CD4-positive, alpha-beta T cell (primary cell): ENCODE measurements at regions of chr2 and their contacts with region 1.

Region 1: DNA sequence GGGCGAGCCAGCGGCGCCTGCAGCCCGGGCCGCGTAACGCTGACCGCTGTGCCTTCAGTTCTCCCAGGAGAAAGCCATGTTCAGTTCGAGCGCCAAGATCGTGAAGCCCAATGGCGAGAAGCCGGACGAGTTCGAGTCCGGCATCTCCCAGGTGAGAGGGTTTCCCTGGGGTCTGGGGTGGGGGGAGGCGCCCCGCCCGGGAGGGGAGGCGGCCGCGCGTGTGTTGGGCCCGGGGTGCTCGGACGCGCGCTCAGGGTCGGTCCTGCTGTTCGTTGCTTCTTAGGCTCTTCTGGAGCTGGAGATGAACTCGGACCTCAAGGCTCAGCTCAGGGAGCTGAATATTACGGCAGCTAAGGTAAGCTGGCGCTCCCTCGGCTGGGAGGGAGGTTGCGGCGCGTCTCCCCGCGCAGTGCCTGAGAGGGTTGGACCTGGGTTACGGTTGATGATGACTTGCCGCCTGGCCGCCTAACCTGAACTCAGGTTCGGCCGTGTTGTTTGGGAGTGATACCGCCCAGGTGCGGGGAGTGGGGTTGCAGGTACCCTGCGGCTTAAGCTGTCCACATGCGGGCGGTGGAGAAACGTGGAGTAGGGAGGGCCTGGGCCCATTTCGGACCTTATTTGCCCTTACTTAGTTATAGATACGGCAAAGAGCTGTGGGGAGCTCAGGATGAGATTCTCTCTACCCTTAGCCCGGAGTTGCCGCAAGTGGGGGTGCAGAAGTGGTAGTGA is 638 bp downstream of the RPS7 start:
- DNase-seq: peak in 10 of 14 experiments; percentile 18 to 66 (median 30)
- ATAC-seq: peak; percentile 43
- H3K4me3 ChIP-seq: peak overlapping the region; percentile 70
- H3K4me3 Mint-ChIP-seq: peak overlapping the region; percentile 89
- H3K27ac ChIP-seq: peak overlapping the region; percentile 76 to 89
- H3K27ac Mint-ChIP-seq: peak overlapping the region; percentile 93
- H3K4me1 ChIP-seq: peaks cover 28% of the 10 kb centered on the region
- H3K4me1 Mint-ChIP-seq: peaks cover 46% of the 10 kb centered on the region
- H3K27me3 ChIP-seq: no peaks in the 10 kb centered on the region
- H3K27me3 Mint-ChIP-seq: no peaks in the 10 kb centered on the region
- CTCF ChIP-seq: no peak

Region 2: GRCh38 chr2:3518496-3519254 is 57.0 kb before region 1 on chr2:
- CTCF ChIA-PET with region 1: no interaction called
- POLR2A ChIA-PET with region 1: interaction called, 32 read pairs
- intact Hi-C with region 1: loop called in 1 of 2 experiments (anchors 1 kb)
- DNase-seq: peak; percentile 94 to 99 (median 98)
- ATAC-seq: peak; percentile 65
- H3K4me3 ChIP-seq: peak overlapping the region; percentile 87
- H3K4me3 Mint-ChIP-seq: peak overlapping the region; percentile 94
- H3K27ac ChIP-seq: peak overlapping the region; percentile 76 to 96
- H3K27ac Mint-ChIP-seq: peak overlapping the region; percentile 88
- H3K4me1 ChIP-seq: peaks cover 24% of the 10 kb centered on the region
- H3K4me1 Mint-ChIP-seq: peaks cover 46% of the 10 kb centered on the region
- H3K27me3 ChIP-seq: no peaks in the 10 kb centered on the region
- H3K27me3 Mint-ChIP-seq: no peaks in the 10 kb centered on the region
- CTCF ChIP-seq: no peak

Region 3: DNA sequence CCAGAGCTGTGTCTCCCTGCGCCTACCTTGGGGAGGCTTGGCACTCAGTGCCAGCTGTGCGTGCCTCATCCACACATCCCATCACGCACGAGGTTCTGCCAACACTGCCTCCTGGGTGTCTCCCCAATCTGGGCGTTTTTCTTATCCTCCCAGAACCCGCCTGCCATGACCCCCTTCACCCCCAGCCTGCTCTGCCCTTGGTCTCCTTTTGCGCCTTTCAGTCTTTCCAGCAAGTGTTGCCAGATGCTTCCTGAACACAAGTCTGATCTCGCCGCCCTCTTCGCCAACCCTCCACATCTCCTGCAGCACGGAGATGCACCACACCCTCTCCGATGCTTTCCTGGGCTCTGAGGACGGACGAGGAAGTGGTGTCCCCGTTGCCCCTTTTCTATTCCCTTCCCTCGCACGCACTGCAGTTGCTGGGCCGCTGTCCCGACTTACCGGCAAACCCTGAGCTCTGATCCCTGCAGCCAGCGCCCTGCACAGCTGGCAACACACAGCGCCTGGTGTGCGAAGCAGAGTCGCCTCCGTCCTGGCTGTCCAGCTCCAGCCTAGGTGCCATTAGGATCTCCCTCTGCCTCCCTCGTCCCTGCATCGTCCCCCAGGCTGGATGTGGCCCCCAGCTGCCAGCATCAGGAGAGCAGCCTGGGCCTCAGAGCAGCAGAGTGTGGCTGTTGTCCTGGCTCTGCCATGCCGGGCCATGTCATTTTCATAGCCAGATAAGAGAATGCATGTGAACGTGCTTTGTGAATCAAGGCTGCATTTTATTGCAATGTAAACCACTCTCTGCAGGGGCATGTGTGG is 59.7 kb after region 1 on chr2:
- CTCF ChIA-PET with region 1: no interaction called
- POLR2A ChIA-PET with region 1: no interaction called
- intact Hi-C with region 1: no loop called
- DNase-seq: peak in 1 of 14 experiments; percentile 12
- ATAC-seq: no peak
- H3K4me3 ChIP-seq: no peak overlapping the region
- H3K4me3 Mint-ChIP-seq: no peak overlapping the region
- H3K27ac ChIP-seq: no peak overlapping the region
- H3K27ac Mint-ChIP-seq: no peak overlapping the region
- H3K4me1 ChIP-seq: no peaks in the 10 kb centered on the region
- H3K4me1 Mint-ChIP-seq: no peaks in the 10 kb centered on the region
- H3K27me3 ChIP-seq: no peaks in the 10 kb centered on the region
- H3K27me3 Mint-ChIP-seq: no peaks in the 10 kb centered on the region
- CTCF ChIP-seq: no peak

Region 4: GRCh38 chr2:4134551-4135550 is 559.2 kb after region 1 on chr2:
- CTCF ChIA-PET with region 1: no interaction called
- POLR2A ChIA-PET with region 1: no interaction called
- intact Hi-C with region 1: no loop called
- DNase-seq: no peak
- ATAC-seq: no peak
- H3K4me3 ChIP-seq: no peak overlapping the region
- H3K4me3 Mint-ChIP-seq: no peak overlapping the region
- H3K27ac ChIP-seq: no peak overlapping the region
- H3K27ac Mint-ChIP-seq: no peak overlapping the region
- H3K4me1 ChIP-seq: no peaks in the 10 kb centered on the region
- H3K4me1 Mint-ChIP-seq: no peaks in the 10 kb centered on the region
- H3K27me3 ChIP-seq: no peaks in the 10 kb centered on the region
- H3K27me3 Mint-ChIP-seq: no peaks in the 10 kb centered on the region
- CTCF ChIP-seq: no peak